ENCODE measurements at regions of chr11 and their contacts with region 1.

Region 1: GRCh38 chr11:126440792-126441514 is 85.5 kb downstream of the ST3GAL4 start:
- DNase-seq: peak; percentile 65 to 79
- ATAC-seq: peak; percentile 88 to 94
- H3K4me3 ChIP-seq: no peak overlapping the region
- H3K27ac ChIP-seq: peak overlapping the region in 1 of 2 experiments; percentile 55; a peak in 1 of 6 replicates
- H3K4me1 ChIP-seq: no peaks in the 10 kb centered on the region
- CTCF ChIP-seq: peak; percentile 82
- EP300 ChIP-seq: no peak
- POLR2A ChIP-seq: no peak
- RAD21 ChIP-seq: peak; percentile 87 to 91

Region 2: GRCh38 chr11:126465573-126466188 is 24.7 kb after region 1 on chr11:
- CTCF ChIA-PET with region 1: interaction called, 13 read pairs
- POLR2A ChIA-PET with region 1: no interaction called
- DNase-seq: no peak
- ATAC-seq: no peak
- H3K4me3 ChIP-seq: no peak overlapping the region
- H3K27ac ChIP-seq: no peak overlapping the region
- H3K4me1 ChIP-seq: no peaks in the 10 kb centered on the region
- CTCF ChIP-seq: no peak
- EP300 ChIP-seq: no peak
- POLR2A ChIP-seq: no peak
- RAD21 ChIP-seq: no peak

Region 3: DNA sequence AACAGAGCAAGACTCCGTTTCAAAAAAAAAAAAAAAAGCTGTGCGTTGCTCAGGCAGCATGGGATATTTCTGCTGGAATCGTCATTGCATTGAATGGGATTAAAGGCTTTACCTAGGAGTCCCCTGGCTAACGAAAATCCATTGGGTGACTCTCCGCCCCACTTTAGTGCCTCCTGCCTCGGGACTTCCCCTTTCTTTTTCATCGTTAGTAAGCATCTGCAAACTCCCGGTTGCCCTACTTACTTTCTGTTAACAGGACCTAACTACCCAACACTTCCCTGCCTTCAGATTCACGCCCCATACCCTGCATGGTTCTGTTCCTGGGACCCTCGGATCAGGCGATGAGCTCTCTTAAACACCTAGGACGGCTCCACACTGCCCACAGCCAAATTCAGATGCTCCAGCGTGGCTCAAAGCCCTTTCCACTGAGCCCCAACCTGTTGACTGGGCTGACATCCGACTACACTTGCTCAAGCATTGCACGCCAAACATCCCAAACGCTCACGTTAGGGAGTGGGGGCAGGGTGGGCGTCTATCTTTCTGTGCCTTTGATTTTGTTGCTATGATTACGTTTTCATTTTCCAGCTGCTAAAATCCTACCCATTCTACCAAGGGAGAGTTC is 58.3 kb after region 1 on chr11:
- CTCF ChIA-PET with region 1: no interaction called
- POLR2A ChIA-PET with region 1: no interaction called
- DNase-seq: no peak
- ATAC-seq: no peak
- H3K4me3 ChIP-seq: no peak overlapping the region
- H3K27ac ChIP-seq: no peak overlapping the region
- H3K4me1 ChIP-seq: no peaks in the 10 kb centered on the region
- CTCF ChIP-seq: no peak
- EP300 ChIP-seq: no peak
- POLR2A ChIP-seq: no peak
- RAD21 ChIP-seq: no peak

Region 4: GRCh38 chr11:127345819-127346459 is 905.0 kb after region 1 on chr11:
- CTCF ChIA-PET with region 1: interaction called, 17 read pairs
- POLR2A ChIA-PET with region 1: no interaction called
- DNase-seq: peak; percentile 24 to 25
- ATAC-seq: peak in 1 of 2 experiments; percentile 52; a peak in 1 of 6 replicates
- H3K4me3 ChIP-seq: no peak overlapping the region
- H3K27ac ChIP-seq: no peak overlapping the region
- H3K4me1 ChIP-seq: no peaks in the 10 kb centered on the region
- CTCF ChIP-seq: peak; percentile 52
- EP300 ChIP-seq: no peak
- POLR2A ChIP-seq: no peak
- RAD21 ChIP-seq: peak; percentile 39 to 51; a peak in 4 of 5 replicates

Measured in A549 (cell line).